Psoas muscle (tissue), 8 donors: ENCODE measurements at regions of chr4 and their contacts with region 1.

Region 1: DNA sequence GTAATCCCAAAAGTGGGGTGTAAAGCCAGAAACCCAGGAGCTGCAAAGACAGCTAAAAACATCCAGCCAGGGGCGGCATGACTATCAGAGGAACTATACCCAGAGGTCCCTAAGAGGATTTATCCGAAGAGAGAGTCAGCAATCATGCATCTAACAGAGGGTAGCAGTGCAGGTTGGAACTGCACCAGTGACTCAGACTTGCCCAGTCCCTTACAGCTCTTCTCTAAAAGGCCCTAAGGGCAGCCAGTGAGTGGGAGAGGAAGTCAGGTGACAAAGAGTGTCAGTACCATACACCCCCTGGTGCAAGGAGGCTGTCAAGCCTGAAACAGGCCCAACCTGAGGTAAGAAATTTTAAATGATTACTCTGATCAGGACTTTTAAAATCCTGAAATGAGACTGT is 88.1 kb downstream of the CAMK2D start:
- DNase-seq: no peak
- ATAC-seq: peak; percentile 31 to 63 (median 50)
- H3K4me3 ChIP-seq: no peak overlapping the region
- H3K27ac ChIP-seq: no peak overlapping the region
- H3K4me1 ChIP-seq: peaks cover 40% of the 10 kb centered on the region
- H3K27me3 ChIP-seq: no peaks in the 10 kb centered on the region
- CTCF ChIP-seq: no peak

Region 2: GRCh38 chr4:113468165-113469022 is 205.1 kb before region 1 on chr4:
- intact Hi-C with region 1: no loop called
- DNase-seq: peak; percentile 78 to 84
- ATAC-seq: peak; percentile 92 to 96 (median 94)
- H3K4me3 ChIP-seq: peak overlapping the region; percentile 41
- H3K27ac ChIP-seq: peak overlapping the region; percentile 87
- H3K4me1 ChIP-seq: peaks cover 64% of the 10 kb centered on the region
- H3K27me3 ChIP-seq: no peaks in the 10 kb centered on the region
- CTCF ChIP-seq: no peak

Region 3: DNA sequence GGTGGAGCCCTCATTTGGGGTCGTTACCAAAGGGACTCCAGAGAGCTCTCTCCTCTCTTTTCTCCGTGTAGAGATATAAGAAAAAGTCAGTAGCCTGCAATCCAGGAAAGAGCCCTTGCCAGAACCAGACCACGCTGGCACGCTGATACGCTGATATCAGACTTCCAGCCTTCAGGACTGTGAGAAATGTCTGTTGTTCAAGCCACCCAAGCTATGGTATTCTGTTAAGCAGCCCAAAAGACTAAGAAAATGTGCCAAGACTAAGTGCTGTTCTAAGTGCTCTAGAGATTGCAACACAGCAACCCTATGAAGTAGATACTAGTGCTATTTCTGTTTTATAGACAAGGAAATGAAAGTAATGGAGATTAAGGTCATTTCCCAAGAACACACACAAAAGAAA is 117.6 kb before region 1 on chr4:
- intact Hi-C with region 1: loop called in 1 of 2 experiments (anchors 10 kb)
- DNase-seq: no peak
- ATAC-seq: peak in 2 of 4 donors; percentile 55 to 56
- H3K4me3 ChIP-seq: no peak overlapping the region
- H3K27ac ChIP-seq: peak overlapping the region; percentile 10
- H3K4me1 ChIP-seq: peaks cover 8% of the 10 kb centered on the region
- H3K27me3 ChIP-seq: no peaks in the 10 kb centered on the region
- CTCF ChIP-seq: no peak

Region 4: GRCh38 chr4:113773014-113773413 is 99.6 kb after region 1 on chr4:
- intact Hi-C with region 1: no loop called
- DNase-seq: no peak
- ATAC-seq: no peak
- H3K4me3 ChIP-seq: no peak overlapping the region
- H3K27ac ChIP-seq: no peak overlapping the region
- H3K4me1 ChIP-seq: no peaks in the 10 kb centered on the region
- H3K27me3 ChIP-seq: no peaks in the 10 kb centered on the region
- CTCF ChIP-seq: no peak